ENCODE measurements at regions of chr12 and their contacts with region 1.

Region 1: DNA sequence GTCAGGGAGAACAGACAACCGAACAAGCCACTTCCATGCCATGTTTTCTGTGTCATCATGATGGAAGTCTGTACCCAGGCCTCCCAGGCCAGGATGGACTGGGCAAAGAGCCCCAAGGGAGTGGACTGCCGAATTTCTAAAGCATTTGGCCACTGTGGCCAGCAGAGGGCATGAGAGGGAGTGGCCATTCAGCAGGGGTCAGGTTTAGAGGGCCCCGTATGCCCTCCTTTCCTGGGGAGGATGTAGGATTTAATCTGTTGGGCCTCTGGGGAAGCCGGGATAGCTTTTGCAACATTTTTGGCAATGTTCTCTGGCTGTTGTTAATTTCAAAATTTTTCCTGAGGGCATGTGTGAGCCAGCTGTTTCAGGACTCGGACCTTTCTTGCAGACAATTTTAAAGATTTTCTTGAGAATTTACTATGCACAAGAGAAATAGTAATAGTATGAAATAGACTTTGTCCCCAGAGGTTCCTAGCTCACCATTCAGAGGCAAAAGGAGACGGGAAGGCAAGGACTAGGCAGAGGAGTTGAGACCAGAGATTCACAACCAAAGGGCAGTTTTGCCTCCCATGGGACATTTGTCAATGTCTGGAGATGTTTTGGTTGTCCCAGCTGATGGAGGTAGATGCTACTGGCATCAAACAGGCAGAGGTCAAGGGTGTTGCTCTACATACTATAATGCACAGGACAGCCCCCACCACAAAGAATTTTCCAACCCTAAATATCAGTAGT is 18.0 kb downstream of the ACACB start:
- DNase-seq: peak; percentile 75
- ATAC-seq: peak; percentile 93
- H3K4me3 Mint-ChIP-seq: no peak overlapping the region
- H3K27ac Mint-ChIP-seq: no peak overlapping the region
- H3K4me1 Mint-ChIP-seq: peaks cover 2% of the 10 kb centered on the region; the same call in 1 of the 2 replicates
- H3K27me3 Mint-ChIP-seq: no peaks in the 10 kb centered on the region; the same call in 1 of the 2 replicates
- CTCF ChIP-seq: no peak; the same call in 1 of the 2 replicates

Region 2: DNA sequence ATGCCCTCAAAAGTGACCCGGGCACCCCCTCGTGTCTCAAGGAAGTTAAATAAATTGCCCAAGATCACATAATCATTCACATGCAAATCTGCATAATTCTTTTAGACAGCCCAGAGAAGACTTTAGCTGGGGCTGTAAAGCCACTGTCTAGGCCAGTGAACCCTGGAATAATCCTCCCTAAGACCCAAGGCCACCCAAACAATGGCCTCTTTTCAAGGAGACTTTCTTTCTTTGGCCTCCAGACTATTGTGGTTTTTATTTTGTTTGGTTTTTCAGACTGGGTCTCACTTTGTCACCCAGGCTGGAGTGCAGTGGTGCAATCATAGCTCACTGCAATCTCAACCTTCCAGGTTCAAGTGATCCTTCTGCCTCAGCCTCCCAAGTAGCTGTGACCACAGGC is 124.1 kb before region 1 on chr12:
- CTCF ChIA-PET with region 1: no interaction called
- POLR2A ChIA-PET with region 1: no interaction called
- DNase-seq: no peak
- ATAC-seq: no peak
- H3K4me3 Mint-ChIP-seq: no peak overlapping the region
- H3K27ac Mint-ChIP-seq: no peak overlapping the region
- H3K4me1 Mint-ChIP-seq: peaks cover 4% of the 10 kb centered on the region; the same call in 1 of the 2 replicates
- H3K27me3 Mint-ChIP-seq: peaks cover 4% of the 10 kb centered on the region; the same call in 1 of the 2 replicates
- CTCF ChIP-seq: no peak

Region 3: DNA sequence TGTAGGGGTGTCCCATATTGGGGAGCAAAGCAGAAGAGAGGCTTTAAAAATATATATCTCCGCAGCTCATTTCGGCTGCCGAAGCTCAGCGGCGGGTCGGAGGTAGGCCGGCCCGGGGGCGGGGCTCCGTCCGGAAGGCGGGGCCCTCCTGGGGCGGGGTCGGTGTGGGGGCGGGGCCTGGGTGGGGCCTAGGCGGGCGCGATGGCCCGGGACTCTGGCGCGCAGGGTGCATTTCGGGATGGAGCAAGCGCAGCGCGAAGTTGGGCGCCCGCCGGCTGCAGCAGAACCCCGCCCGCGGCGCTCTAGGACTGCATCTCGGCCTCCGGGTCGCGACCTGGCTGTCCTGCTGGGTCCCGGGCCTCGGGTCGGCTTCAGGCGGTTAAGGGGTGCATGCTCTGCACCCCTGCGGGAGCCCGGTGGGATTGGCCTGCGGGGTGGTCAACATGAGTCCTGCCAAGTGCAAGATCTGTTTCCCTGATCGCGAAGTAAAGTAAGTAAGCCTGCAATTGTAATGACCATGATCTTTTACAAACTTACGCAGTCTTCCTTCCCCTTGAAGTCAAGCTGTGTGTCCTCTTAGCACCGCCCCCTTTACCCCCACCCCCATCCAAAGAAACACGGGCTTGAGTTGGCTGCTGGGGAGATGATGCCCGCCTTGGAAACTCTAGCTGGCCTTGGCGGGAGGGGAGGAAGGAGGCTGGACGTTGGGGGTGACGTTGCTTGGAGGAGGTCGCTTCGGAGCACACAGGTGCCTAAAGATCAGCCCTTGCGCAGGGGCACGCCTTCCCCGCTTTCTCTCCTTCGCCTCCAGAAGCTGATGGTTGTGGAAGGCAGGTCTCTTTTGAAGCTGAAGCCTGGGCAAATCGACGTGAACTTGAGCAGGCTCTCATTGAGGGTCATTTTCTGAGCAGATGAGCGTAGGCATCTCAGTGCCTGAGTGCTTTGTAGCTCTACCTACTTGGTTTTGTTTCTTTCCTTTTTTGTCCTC is 20.4 kb after region 1 on chr12:
- CTCF ChIA-PET with region 1: interaction called, 10 read pairs
- POLR2A ChIA-PET with region 1: interaction called, 3 read pairs
- DNase-seq: peak; percentile 89
- ATAC-seq: peak; percentile 95
- H3K4me3 Mint-ChIP-seq: peak overlapping the region; percentile 87
- H3K27ac Mint-ChIP-seq: peak overlapping the region; percentile 97
- H3K4me1 Mint-ChIP-seq: peaks cover 13% of the 10 kb centered on the region
- H3K27me3 Mint-ChIP-seq: peaks cover 18% of the 10 kb centered on the region
- CTCF ChIP-seq: no peak

Measured in WTC11 (cell line).